ENCODE measurements at regions of chr5 and their contacts with region 1.

Region 1: DNA sequence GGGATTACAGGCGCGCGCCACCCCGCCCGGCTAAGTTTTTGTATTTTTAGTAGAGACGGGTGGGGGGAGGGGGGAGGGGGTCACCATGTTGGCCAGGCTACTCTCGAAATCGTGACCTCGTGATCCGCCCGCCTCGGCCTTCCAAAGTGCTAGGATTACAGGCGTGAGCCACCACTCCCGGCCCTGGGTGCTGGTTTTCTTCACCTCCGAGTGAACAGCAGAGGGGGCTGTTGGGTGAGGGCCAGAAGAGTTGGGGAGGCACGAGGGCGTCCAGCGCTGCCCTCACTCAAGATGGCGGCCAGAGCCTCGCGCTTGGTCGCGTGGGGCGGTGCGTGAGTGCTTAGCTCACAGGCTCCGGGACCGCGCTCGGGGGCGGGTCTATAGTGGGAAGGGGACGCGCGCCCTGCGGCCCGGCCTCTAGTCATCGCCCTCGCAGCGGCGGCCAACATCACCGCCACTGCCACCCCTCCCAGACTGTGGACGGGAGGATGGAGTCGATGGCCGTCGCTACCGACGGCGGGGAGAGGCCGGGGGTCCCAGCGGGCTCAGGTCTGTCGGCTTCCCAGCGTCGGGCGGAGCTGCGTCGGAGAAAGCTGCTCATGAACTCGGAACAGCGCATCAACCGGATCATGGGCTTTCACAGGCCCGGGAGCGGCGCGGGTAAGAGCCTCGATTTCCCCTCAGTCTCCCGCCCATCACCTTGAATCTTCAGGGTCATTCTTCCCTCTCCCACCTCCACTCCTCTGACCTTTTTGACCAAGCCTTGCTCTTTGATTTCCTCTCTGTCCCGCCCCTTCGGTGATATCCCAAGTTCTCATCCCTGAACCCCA is at the start of gene CAMLG:
- DNase-seq: peak; percentile 99
- H3K4me3 Mint-ChIP-seq: peak within 1 kb of the TSS; percentile 97
- H3K27ac Mint-ChIP-seq: peak within 1 kb of the TSS; percentile 95
- H3K4me1 Mint-ChIP-seq: peaks cover 17% of the 10 kb centered on the region
- H3K27me3 Mint-ChIP-seq: no peaks in the 10 kb centered on the region
- CTCF ChIP-seq: peak; percentile 55
- total RNA-seq, gene CAMLG: 38.3 and 41.8 TPM in 2 replicates

Region 2: DNA sequence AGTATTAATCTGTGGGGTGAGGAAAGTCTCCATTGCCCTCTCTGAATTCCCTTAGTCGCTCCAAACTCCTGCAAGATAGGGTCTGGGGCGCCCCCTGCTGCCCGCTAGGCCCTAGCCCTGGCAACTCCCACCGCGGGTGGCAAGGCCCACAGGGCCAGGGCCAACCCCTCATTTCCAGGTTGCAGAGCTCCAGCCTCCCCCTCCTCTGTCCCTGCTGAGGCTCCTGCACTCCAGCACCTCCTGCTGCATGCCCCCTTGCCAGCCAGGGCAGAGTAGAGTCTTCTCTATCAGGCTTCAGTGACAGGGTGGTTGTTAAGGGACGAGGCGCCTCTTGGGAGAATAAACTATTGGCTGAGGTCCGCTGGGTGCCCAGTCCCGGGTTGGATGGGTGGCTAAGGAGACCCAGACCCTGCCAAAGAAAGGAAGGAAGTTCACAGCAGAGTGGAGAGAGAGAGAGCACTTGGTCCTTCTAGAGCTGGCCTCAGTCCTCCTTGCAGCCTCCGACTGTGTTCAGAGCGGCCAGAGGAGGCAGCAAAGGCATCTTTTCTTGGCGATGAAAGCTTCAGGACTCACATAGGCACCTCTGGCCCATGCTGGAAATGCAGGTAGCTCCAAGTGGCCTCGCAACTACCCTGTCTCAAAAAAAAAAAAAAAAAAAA is 151.4 kb before region 1 on chr5:
- CTCF ChIA-PET with region 1: interaction called, 3 read pairs
- POLR2A ChIA-PET with region 1: no interaction called
- intact Hi-C with region 1: loop called (anchors 2 kb)
- DNase-seq: peak; percentile 88
- H3K4me3 Mint-ChIP-seq: no peak overlapping the region
- H3K27ac Mint-ChIP-seq: no peak overlapping the region
- H3K4me1 Mint-ChIP-seq: peaks cover 18% of the 10 kb centered on the region
- H3K27me3 Mint-ChIP-seq: no peaks in the 10 kb centered on the region
- CTCF ChIP-seq: peak; percentile 89

Region 3: GRCh38 chr5:134648425-134649162 is 89.8 kb before region 1 on chr5 and contains the start of gene SEC24A:
- CTCF ChIA-PET with region 1: no interaction called
- POLR2A ChIA-PET with region 1: interaction called, 38 read pairs
- intact Hi-C with region 1: loop called (anchors 2 kb)
- DNase-seq: peak; percentile 95
- H3K4me3 Mint-ChIP-seq: peak within 1 kb of the TSS; percentile 99
- H3K27ac Mint-ChIP-seq: peak within 1 kb of the TSS; percentile 100
- H3K4me1 Mint-ChIP-seq: peaks cover 5% of the 10 kb centered on the region
- H3K27me3 Mint-ChIP-seq: no peaks in the 10 kb centered on the region
- CTCF ChIP-seq: no peak
- total RNA-seq, gene SEC24A: 39.1 and 41.4 TPM in 2 replicates

Region 4: DNA sequence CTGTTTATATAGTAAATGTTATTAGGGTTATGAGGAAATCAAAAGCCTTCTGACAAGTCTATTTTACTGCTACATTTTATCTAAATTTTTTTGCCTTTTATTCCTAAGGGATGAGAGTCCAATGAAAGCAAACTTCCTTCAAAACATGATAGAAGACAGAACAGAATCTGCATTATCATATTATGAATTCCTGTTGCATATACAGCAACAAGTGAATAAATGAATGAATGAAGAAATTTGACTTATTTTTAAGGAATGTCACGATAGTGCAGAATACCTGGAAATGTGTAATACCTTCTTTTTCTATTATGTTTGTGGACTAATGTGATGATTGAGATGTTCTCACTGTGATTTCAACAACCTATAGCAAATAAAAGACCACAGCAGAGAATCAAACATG is 13.5 kb before region 1 on chr5:
- CTCF ChIA-PET with region 1: interaction called, 3 read pairs
- POLR2A ChIA-PET with region 1: interaction called, 14 read pairs
- intact Hi-C with region 1: no loop called
- DNase-seq: no peak
- H3K4me3 Mint-ChIP-seq: no peak overlapping the region
- H3K27ac Mint-ChIP-seq: no peak overlapping the region
- H3K4me1 Mint-ChIP-seq: no peaks in the 10 kb centered on the region
- H3K27me3 Mint-ChIP-seq: no peaks in the 10 kb centered on the region
- CTCF ChIP-seq: no peak

Region 5: GRCh38 chr5:134758504-134759341 is 20.4 kb after region 1 on chr5 and contains the start of gene DDX46:
- CTCF ChIA-PET with region 1: interaction called, 71 read pairs
- POLR2A ChIA-PET with region 1: interaction called, 156 read pairs
- intact Hi-C with region 1: loop called (anchors 1 kb)
- DNase-seq: peak; percentile 98
- H3K4me3 Mint-ChIP-seq: peak within 1 kb of the TSS; percentile 100
- H3K27ac Mint-ChIP-seq: peak within 1 kb of the TSS; percentile 95
- H3K4me1 Mint-ChIP-seq: peaks cover 19% of the 10 kb centered on the region
- H3K27me3 Mint-ChIP-seq: no peaks in the 10 kb centered on the region
- CTCF ChIP-seq: peak; percentile 91
- total RNA-seq, gene DDX46: 57.7 and 77.0 TPM in 2 replicates

Region 6: DNA sequence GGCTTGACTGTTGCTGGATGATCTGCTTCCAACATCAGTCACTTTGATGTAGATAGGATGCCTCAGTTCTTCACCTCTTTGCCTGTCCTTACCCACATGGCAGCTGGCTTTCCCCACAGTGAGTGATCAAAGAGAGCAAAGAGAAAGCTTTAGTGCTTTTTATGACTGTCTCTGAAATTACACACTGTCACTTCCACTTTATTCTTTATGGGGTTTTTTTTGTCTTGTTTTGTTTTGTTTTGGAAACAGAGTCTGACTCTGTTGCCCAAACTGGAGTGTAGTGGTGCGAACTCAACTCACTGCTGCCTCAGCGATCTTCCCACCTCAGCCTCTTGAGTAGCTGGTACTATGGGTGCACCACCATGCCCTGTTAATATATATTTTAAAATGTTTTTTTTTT is 75.1 kb after region 1 on chr5:
- CTCF ChIA-PET with region 1: no interaction called
- POLR2A ChIA-PET with region 1: no interaction called
- intact Hi-C with region 1: no loop called
- DNase-seq: no peak
- H3K4me3 Mint-ChIP-seq: no peak overlapping the region
- H3K27ac Mint-ChIP-seq: no peak overlapping the region
- H3K4me1 Mint-ChIP-seq: no peaks in the 10 kb centered on the region
- H3K27me3 Mint-ChIP-seq: no peaks in the 10 kb centered on the region
- CTCF ChIP-seq: no peak

Region 7: GRCh38 chr5:134845852-134846640 is 107.7 kb after region 1 on chr5 and contains the start of gene C5orf24:
- CTCF ChIA-PET with region 1: interaction called, 3 read pairs
- POLR2A ChIA-PET with region 1: interaction called, 17 read pairs
- intact Hi-C with region 1: loop called (anchors 1 kb)
- DNase-seq: peak; percentile 97
- H3K4me3 Mint-ChIP-seq: peak within 1 kb of the TSS; percentile 96
- H3K27ac Mint-ChIP-seq: peak within 1 kb of the TSS; percentile 98
- H3K4me1 Mint-ChIP-seq: peaks cover 25% of the 10 kb centered on the region
- H3K27me3 Mint-ChIP-seq: no peaks in the 10 kb centered on the region
- CTCF ChIP-seq: no peak
- total RNA-seq, gene C5orf24: 61.4 and 66.0 TPM in 2 replicates

Region 8: DNA sequence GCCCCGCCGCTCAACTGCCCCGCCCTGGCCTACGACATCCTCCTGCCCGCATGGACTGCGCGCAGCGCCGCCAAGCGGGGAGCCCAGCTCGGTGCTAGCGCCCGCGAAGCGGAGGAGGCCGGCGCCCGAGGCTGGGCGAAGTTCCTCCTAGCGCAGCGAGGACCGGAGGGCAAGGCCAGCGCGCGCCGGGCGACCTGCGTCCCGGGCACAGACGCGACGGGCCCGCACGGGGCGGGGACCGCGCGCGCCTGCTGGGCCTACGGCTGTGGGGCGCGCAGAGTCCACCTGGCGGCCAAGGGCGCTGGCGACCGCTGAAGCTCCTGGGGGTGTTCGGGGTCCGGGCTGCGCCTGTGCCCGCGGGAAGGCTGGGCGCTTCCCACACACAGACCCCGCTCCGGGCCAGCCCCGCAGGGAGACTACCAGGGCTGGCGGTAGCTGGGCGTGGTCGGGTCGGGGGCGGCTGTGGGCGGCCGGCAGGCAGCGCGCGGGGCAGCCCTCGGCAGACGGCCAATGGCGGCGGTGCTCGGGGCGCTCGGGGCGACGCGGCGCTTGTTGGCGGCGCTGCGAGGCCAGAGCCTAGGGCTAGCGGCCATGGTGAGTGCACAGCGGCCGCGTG is 166.4 kb after region 1 on chr5 and contains the start of gene PCBD2:
- CTCF ChIA-PET with region 1: interaction called, 4 read pairs
- POLR2A ChIA-PET with region 1: interaction called, 16 read pairs
- intact Hi-C with region 1: loop called (anchors 1 kb)
- DNase-seq: peak; percentile 94
- H3K4me3 Mint-ChIP-seq: peak within 1 kb of the TSS; percentile 96
- H3K27ac Mint-ChIP-seq: peak within 1 kb of the TSS; percentile 94
- H3K4me1 Mint-ChIP-seq: no peaks in the 10 kb centered on the region
- H3K27me3 Mint-ChIP-seq: no peaks in the 10 kb centered on the region
- CTCF ChIP-seq: peak; percentile 95
- total RNA-seq, gene PCBD2: 27.3 and 34.5 TPM in 2 replicates